Caco-2 (cell line): ENCODE measurements at regions of chr2 and their contacts with region 1.

Region 1: DNA sequence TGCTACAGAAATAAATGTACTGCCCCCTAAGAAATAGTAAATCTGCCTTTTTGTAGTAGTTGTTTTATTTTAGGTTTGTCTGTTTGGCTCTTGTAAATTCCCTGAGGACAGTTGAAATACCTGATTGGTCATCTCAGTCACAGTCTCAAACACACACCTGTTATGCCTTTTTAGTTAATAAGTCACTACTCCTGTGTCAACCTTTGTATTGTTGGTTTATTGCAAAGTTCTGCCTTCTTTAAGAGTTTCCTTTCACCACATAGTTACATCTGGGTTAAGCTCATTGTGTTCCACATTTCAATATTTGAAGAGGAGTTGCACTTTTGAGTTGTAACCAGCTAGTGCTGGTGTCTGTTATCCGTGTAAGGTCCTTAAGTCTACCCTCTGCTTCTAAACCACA is 198.7 kb downstream of the CCDC85A start:
- DNase-seq: peak in 1 of 2 experiments; percentile 22
- H3K4me3 ChIP-seq: no peak overlapping the region
- H3K4me3 Mint-ChIP-seq: no peak overlapping the region
- H3K27ac Mint-ChIP-seq: no peak overlapping the region
- H3K4me1 ChIP-seq: no peaks in the 10 kb centered on the region
- H3K4me1 Mint-ChIP-seq: peaks cover 8% of the 10 kb centered on the region
- H3K27me3 ChIP-seq: no peaks in the 10 kb centered on the region
- H3K27me3 Mint-ChIP-seq: peaks cover 2% of the 10 kb centered on the region
- CTCF ChIP-seq: no peak

Region 2: GRCh38 chr2:56271275-56271674 is 111.2 kb before region 1 on chr2:
- CTCF ChIA-PET with region 1: no interaction called
- POLR2A ChIA-PET with region 1: no interaction called
- intact Hi-C with region 1: no loop called
- DNase-seq: no peak
- H3K4me3 ChIP-seq: no peak overlapping the region
- H3K4me3 Mint-ChIP-seq: no peak overlapping the region
- H3K27ac Mint-ChIP-seq: no peak overlapping the region
- H3K4me1 ChIP-seq: no peaks in the 10 kb centered on the region
- H3K4me1 Mint-ChIP-seq: no peaks in the 10 kb centered on the region
- H3K27me3 ChIP-seq: no peaks in the 10 kb centered on the region
- H3K27me3 Mint-ChIP-seq: peaks cover 10% of the 10 kb centered on the region
- CTCF ChIP-seq: no peak

Region 3: GRCh38 chr2:56416500-56417176 is 34.2 kb after region 1 on chr2:
- CTCF ChIA-PET with region 1: no interaction called
- POLR2A ChIA-PET with region 1: no interaction called
- intact Hi-C with region 1: loop called (anchors 1 kb)
- DNase-seq: no peak
- H3K4me3 ChIP-seq: no peak overlapping the region
- H3K4me3 Mint-ChIP-seq: no peak overlapping the region
- H3K27ac Mint-ChIP-seq: no peak overlapping the region
- H3K4me1 ChIP-seq: no peaks in the 10 kb centered on the region
- H3K4me1 Mint-ChIP-seq: no peaks in the 10 kb centered on the region
- H3K27me3 ChIP-seq: no peaks in the 10 kb centered on the region
- H3K27me3 Mint-ChIP-seq: peaks cover 17% of the 10 kb centered on the region
- CTCF ChIP-seq: no peak

Region 4: DNA sequence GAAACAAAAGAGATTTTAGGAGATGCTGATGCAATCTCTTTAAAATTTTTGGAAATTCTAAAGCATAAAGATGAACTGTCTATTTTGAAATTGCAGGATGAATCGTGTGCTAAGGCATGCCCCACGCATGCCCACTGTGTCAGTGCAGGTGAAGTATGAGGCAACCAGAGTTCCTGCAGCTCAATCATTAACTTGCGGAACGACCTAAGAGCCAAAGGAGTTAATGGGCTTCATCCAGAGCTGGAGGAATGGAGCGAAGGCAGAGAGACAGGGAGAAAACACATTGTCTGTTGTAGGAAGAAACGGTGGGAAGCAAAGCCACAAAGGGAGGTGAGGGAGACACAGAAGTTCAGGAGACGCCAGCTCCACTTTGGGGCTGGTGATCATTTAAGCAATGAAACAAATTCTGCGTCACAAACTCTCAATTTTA is 66.6 kb after region 1 on chr2:
- CTCF ChIA-PET with region 1: interaction called, 3 read pairs
- POLR2A ChIA-PET with region 1: no interaction called
- intact Hi-C with region 1: loop called (anchors 2 kb)
- DNase-seq: peak; percentile 87 to 88
- H3K4me3 ChIP-seq: peak overlapping the region; percentile 23; the same call in 1 of the 2 replicates
- H3K4me3 Mint-ChIP-seq: peak overlapping the region; percentile 69
- H3K27ac Mint-ChIP-seq: peak overlapping the region; percentile 37
- H3K4me1 ChIP-seq: peaks cover 11% of the 10 kb centered on the region
- H3K4me1 Mint-ChIP-seq: peaks cover 26% of the 10 kb centered on the region
- H3K27me3 ChIP-seq: no peaks in the 10 kb centered on the region
- H3K27me3 Mint-ChIP-seq: no peaks in the 10 kb centered on the region
- CTCF ChIP-seq: no peak